Caco-2 (cell line): ENCODE measurements at regions of chr4 and their contacts with region 1.

Region 1: GRCh38 chr4:26860157-26860921 is at the start of gene STIM2:
- DNase-seq: peak; percentile 97 to 98
- H3K4me3 ChIP-seq: peak within 1 kb of the TSS; percentile 74
- H3K4me3 Mint-ChIP-seq: peak within 1 kb of the TSS; percentile 80
- H3K27ac Mint-ChIP-seq: peak within 1 kb of the TSS; percentile 85
- H3K4me1 ChIP-seq: peaks cover 11% of the 10 kb centered on the region
- H3K4me1 Mint-ChIP-seq: peaks cover 19% of the 10 kb centered on the region
- H3K27me3 ChIP-seq: no peaks in the 10 kb centered on the region
- H3K27me3 Mint-ChIP-seq: no peaks in the 10 kb centered on the region
- CTCF ChIP-seq: peak; percentile 20 to 43
- total RNA-seq, gene STIM2: 27.2 and 28.5 TPM in 2 replicates

Region 2: GRCh38 chr4:26459054-26459755 is 401.1 kb before region 1 on chr4:
- CTCF ChIA-PET with region 1: no interaction called
- POLR2A ChIA-PET with region 1: interaction called, 3 read pairs
- intact Hi-C with region 1: loop called (anchors 5 kb)
- DNase-seq: peak in 1 of 2 experiments; percentile 36
- H3K4me3 ChIP-seq: no peak overlapping the region
- H3K4me3 Mint-ChIP-seq: peak overlapping the region; percentile 46
- H3K27ac Mint-ChIP-seq: no peak overlapping the region
- H3K4me1 ChIP-seq: no peaks in the 10 kb centered on the region
- H3K4me1 Mint-ChIP-seq: no peaks in the 10 kb centered on the region
- H3K27me3 ChIP-seq: no peaks in the 10 kb centered on the region
- H3K27me3 Mint-ChIP-seq: no peaks in the 10 kb centered on the region
- CTCF ChIP-seq: peak; percentile 42 to 51

Region 3: DNA sequence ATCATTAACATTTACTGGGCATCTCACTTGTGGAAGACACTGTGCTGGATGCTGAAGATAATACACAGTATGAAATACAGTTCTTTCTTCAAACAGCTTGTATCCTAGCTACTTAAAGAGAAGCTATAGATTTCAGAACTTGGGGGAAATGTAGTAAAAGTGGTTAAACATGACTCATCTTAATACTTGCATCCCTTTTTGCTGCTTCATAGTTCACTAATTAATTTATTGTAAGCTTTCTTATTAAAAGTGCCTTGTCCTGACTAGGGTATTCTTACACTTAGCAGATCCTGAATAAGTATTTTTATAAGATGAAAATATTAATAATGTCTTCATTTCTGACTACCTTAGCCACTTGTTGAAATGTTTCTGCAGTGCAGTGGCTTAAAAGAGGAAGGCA is 132.5 kb before region 1 on chr4:
- CTCF ChIA-PET with region 1: no interaction called
- POLR2A ChIA-PET with region 1: no interaction called
- intact Hi-C with region 1: loop called (anchors 2 kb)
- DNase-seq: no peak
- H3K4me3 ChIP-seq: no peak overlapping the region
- H3K4me3 Mint-ChIP-seq: no peak overlapping the region
- H3K27ac Mint-ChIP-seq: no peak overlapping the region
- H3K4me1 ChIP-seq: peaks cover 18% of the 10 kb centered on the region
- H3K4me1 Mint-ChIP-seq: peaks cover 9% of the 10 kb centered on the region
- H3K27me3 ChIP-seq: no peaks in the 10 kb centered on the region
- H3K27me3 Mint-ChIP-seq: no peaks in the 10 kb centered on the region
- CTCF ChIP-seq: no peak

Region 4: DNA sequence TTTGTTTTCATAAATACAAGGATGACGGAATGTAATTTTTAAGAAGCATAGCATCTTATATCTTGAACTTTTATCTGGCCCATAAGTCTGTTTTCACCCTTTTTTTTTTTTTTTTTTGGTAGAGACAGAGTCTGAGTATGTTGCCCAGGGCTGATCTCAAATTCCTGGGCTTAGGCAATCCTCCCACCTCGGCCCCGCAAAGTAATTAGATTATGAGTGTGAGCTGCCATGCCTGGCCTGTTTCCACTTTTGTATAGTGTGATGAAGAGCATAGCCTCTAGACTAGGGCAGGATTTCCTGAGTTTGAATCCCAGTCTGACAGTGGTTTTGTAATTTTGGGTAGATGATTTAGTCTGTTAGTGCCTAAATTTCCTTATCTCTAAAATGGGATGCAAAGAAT is 11.3 kb after region 1 on chr4:
- CTCF ChIA-PET with region 1: no interaction called
- POLR2A ChIA-PET with region 1: no interaction called
- intact Hi-C with region 1: loop called (anchors 1 kb)
- DNase-seq: no peak
- H3K4me3 ChIP-seq: no peak overlapping the region
- H3K4me3 Mint-ChIP-seq: no peak overlapping the region
- H3K27ac Mint-ChIP-seq: no peak overlapping the region
- H3K4me1 ChIP-seq: 0 out of 2 replicates have a peak, but pooled peaks cover 4% of the 10 kb centered on the region
- H3K4me1 Mint-ChIP-seq: peaks cover 5% of the 10 kb centered on the region
- H3K27me3 ChIP-seq: no peaks in the 10 kb centered on the region
- H3K27me3 Mint-ChIP-seq: no peaks in the 10 kb centered on the region
- CTCF ChIP-seq: no peak

Region 5: GRCh38 chr4:26931966-26932365 is 71.6 kb after region 1 on chr4:
- CTCF ChIA-PET with region 1: no interaction called
- POLR2A ChIA-PET with region 1: no interaction called
- intact Hi-C with region 1: no loop called
- DNase-seq: no peak
- H3K4me3 ChIP-seq: no peak overlapping the region
- H3K4me3 Mint-ChIP-seq: no peak overlapping the region
- H3K27ac Mint-ChIP-seq: no peak overlapping the region
- H3K4me1 ChIP-seq: 0 out of 2 replicates have a peak, but pooled peaks cover 5% of the 10 kb centered on the region
- H3K4me1 Mint-ChIP-seq: no peaks in the 10 kb centered on the region
- H3K27me3 ChIP-seq: no peaks in the 10 kb centered on the region
- H3K27me3 Mint-ChIP-seq: no peaks in the 10 kb centered on the region
- CTCF ChIP-seq: no peak

Region 6: GRCh38 chr4:27010334-27010940 is 150.1 kb after region 1 on chr4:
- CTCF ChIA-PET with region 1: no interaction called
- POLR2A ChIA-PET with region 1: no interaction called
- intact Hi-C with region 1: loop called (anchors 2 kb)
- DNase-seq: peak; percentile 43 to 55
- H3K4me3 ChIP-seq: no peak overlapping the region
- H3K4me3 Mint-ChIP-seq: no peak overlapping the region
- H3K27ac Mint-ChIP-seq: no peak overlapping the region
- H3K4me1 ChIP-seq: no peaks in the 10 kb centered on the region
- H3K4me1 Mint-ChIP-seq: no peaks in the 10 kb centered on the region
- H3K27me3 ChIP-seq: no peaks in the 10 kb centered on the region
- H3K27me3 Mint-ChIP-seq: no peaks in the 10 kb centered on the region
- CTCF ChIP-seq: peak; percentile 74 to 80